ENCODE measurements at regions of chr13 and their contacts with region 1.

Region 1: GRCh38 chr13:28204690-28205443 is 66.5 kb downstream of the PAN3 start:
- DNase-seq: peak; percentile 75
- H3K4me3 Mint-ChIP-seq: no peak overlapping the region
- H3K27ac Mint-ChIP-seq: no peak overlapping the region
- H3K4me1 Mint-ChIP-seq: peaks cover 38% of the 10 kb centered on the region
- H3K27me3 Mint-ChIP-seq: no peaks in the 10 kb centered on the region

Region 2: DNA sequence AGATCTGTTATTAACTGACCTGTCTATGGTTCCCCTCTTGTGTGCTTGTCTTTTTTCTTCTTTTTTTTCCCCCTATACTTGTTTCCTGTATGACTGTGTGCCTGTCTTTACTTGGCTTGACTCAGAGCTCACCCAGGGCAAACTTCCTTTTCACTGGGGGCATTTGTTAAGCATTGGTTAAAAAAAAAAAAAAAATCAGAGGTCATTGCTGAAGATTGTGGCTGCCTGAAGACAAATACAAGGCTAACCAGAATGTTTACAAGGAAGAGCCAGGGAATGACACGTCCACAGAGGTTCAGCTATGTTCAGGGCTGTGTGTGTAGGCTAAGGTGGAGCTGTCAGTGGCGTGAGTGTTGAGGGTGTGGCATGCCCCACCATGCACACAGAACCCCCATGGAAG is 631.6 kb before region 1 on chr13:
- CTCF ChIA-PET with region 1: no interaction called
- intact Hi-C with region 1: no loop called
- DNase-seq: no peak
- H3K4me3 Mint-ChIP-seq: no peak overlapping the region
- H3K27ac Mint-ChIP-seq: no peak overlapping the region
- H3K4me1 Mint-ChIP-seq: peaks cover 2% of the 10 kb centered on the region
- H3K27me3 Mint-ChIP-seq: no peaks in the 10 kb centered on the region

Region 3: GRCh38 chr13:28251466-28251865 is 46.6 kb after region 1 on chr13:
- CTCF ChIA-PET with region 1: no interaction called
- intact Hi-C with region 1: loop called (anchors 1 kb)
- DNase-seq: no peak
- H3K4me3 Mint-ChIP-seq: no peak overlapping the region
- H3K27ac Mint-ChIP-seq: no peak overlapping the region
- H3K4me1 Mint-ChIP-seq: peaks cover 47% of the 10 kb centered on the region
- H3K27me3 Mint-ChIP-seq: no peaks in the 10 kb centered on the region

Region 4: GRCh38 chr13:28268800-28269223 is 63.9 kb after region 1 on chr13:
- CTCF ChIA-PET with region 1: no interaction called
- intact Hi-C with region 1: loop called (anchors 1 kb)
- DNase-seq: no peak
- H3K4me3 Mint-ChIP-seq: no peak overlapping the region
- H3K27ac Mint-ChIP-seq: peak overlapping the region; percentile 34
- H3K4me1 Mint-ChIP-seq: peaks cover 14% of the 10 kb centered on the region
- H3K27me3 Mint-ChIP-seq: no peaks in the 10 kb centered on the region